KBM-7 (cell line): ENCODE measurements at regions of chrX and their contacts with region 1.

Region 1: GRCh38 chrX:54786962-54787361 is 11.1 kb downstream of the ITIH6 start:
- DNase-seq: peak; percentile 57

Region 2: DNA sequence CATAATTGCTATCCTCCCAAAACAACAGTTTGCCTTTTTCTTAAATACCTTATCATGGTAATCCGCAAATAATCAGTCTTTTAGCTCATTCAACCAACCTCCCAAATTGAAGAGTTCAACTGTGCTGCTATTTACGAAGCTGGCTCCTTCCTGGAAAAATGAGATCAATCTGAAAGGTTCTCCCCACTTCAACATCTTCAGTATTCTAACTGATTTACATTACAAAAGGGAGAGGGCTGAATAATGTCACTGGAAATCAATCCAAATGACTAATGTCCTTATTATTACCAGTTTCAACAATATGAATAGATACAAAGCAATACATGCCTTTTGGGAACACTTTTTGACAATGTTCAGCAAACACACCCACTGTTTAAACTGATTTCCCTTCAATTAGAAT is 515.3 kb before region 1 on chrX:
- in situ Hi-C with region 1: loop called (anchors 25 kb)
- DNase-seq: no peak

Region 3: GRCh38 chrX:55695227-55696018 is 908.5 kb after region 1 on chrX:
- in situ Hi-C with region 1: no loop called
- DNase-seq: no peak